PC-9 (cell line): ENCODE measurements at regions of chr12 and their contacts with region 1.

Region 1: GRCh38 chr12:12376646-12377448 is 20.0 kb downstream of the BORCS5 start:
- DNase-seq: peak in 1 of 2 experiments; percentile 80
- H3K4me3 ChIP-seq: no peak overlapping the region
- H3K27ac ChIP-seq: no peak overlapping the region
- H3K4me1 ChIP-seq: no peaks in the 10 kb centered on the region
- H3K27me3 ChIP-seq: no peaks in the 10 kb centered on the region
- CTCF ChIP-seq: peak; percentile 87

Region 2: GRCh38 chr12:12081836-12082497 is 294.9 kb before region 1 on chr12:
- CTCF ChIA-PET with region 1: no interaction called
- POLR2A ChIA-PET with region 1: no interaction called
- intact Hi-C with region 1: loop called (anchors 5 kb)
- DNase-seq: peak; percentile 24 to 40
- H3K4me3 ChIP-seq: no peak overlapping the region
- H3K27ac ChIP-seq: no peak overlapping the region
- H3K4me1 ChIP-seq: no peaks in the 10 kb centered on the region
- H3K27me3 ChIP-seq: no peaks in the 10 kb centered on the region
- CTCF ChIP-seq: no peak; the same call in 1 of the 2 replicates

Region 3: GRCh38 chr12:12115514-12115913 is 261.3 kb before region 1 on chr12:
- CTCF ChIA-PET with region 1: no interaction called
- POLR2A ChIA-PET with region 1: no interaction called
- intact Hi-C with region 1: no loop called
- DNase-seq: no peak
- H3K4me3 ChIP-seq: no peak overlapping the region
- H3K27ac ChIP-seq: no peak overlapping the region
- H3K4me1 ChIP-seq: no peaks in the 10 kb centered on the region
- H3K27me3 ChIP-seq: no peaks in the 10 kb centered on the region
- CTCF ChIP-seq: no peak

Region 4: GRCh38 chr12:12334367-12335040 is 42.3 kb before region 1 on chr12:
- CTCF ChIA-PET with region 1: no interaction called
- POLR2A ChIA-PET with region 1: no interaction called
- intact Hi-C with region 1: no loop called
- DNase-seq: peak in 1 of 2 experiments; percentile 57
- H3K4me3 ChIP-seq: no peak overlapping the region
- H3K27ac ChIP-seq: no peak overlapping the region
- H3K4me1 ChIP-seq: peaks cover 44% of the 10 kb centered on the region
- H3K27me3 ChIP-seq: no peaks in the 10 kb centered on the region
- CTCF ChIP-seq: peak; percentile 89

Region 5: DNA sequence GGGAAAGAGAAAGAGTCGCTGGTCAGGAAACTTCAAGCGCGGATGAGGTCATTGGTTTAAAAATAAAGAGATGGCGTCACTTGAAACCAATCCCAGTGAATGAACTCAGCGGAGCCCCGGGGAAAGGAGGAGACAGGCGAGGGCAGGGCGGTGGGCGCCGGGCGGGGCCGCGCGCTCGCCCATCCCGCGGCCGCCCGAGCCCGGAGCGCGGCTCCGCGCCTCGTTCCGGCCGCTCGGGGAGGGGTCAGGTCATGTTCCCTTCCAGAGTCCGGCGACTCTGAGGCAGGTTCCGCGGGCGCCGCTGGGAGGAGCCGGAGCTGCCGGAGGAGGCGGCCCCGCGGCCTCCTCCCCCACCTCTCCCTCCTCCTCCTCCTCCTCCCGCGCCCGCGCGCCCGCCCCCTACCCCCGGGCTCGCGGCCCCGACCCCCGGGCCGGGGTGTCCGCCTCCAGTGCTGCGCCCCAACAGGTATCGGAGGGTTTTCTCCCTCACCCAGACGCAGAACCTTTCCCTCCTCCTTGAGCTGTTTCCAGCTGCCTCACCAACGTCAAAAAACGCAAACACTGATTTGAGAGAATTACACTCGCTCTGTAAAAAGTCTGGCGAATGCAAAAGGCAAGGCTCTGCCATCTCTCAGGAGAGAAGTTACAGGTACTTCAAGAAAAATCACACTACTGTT is 185.9 kb after region 1 on chr12 and contains the start of gene DUSP16:
- CTCF ChIA-PET with region 1: no interaction called
- POLR2A ChIA-PET with region 1: no interaction called
- intact Hi-C with region 1: loop called (anchors 2 kb)
- DNase-seq: peak; percentile 90 to 99
- H3K4me3 ChIP-seq: peak within 1 kb of the TSS; percentile 73
- H3K27ac ChIP-seq: peak within 1 kb of the TSS; percentile 92
- H3K4me1 ChIP-seq: peaks cover 25% of the 10 kb centered on the region
- H3K27me3 ChIP-seq: no peaks in the 10 kb centered on the region
- CTCF ChIP-seq: peak; percentile 36; the same call in 1 of the 2 replicates
- total RNA-seq, gene DUSP16: 23.6 and 24.8 TPM in 2 replicates

Region 6: DNA sequence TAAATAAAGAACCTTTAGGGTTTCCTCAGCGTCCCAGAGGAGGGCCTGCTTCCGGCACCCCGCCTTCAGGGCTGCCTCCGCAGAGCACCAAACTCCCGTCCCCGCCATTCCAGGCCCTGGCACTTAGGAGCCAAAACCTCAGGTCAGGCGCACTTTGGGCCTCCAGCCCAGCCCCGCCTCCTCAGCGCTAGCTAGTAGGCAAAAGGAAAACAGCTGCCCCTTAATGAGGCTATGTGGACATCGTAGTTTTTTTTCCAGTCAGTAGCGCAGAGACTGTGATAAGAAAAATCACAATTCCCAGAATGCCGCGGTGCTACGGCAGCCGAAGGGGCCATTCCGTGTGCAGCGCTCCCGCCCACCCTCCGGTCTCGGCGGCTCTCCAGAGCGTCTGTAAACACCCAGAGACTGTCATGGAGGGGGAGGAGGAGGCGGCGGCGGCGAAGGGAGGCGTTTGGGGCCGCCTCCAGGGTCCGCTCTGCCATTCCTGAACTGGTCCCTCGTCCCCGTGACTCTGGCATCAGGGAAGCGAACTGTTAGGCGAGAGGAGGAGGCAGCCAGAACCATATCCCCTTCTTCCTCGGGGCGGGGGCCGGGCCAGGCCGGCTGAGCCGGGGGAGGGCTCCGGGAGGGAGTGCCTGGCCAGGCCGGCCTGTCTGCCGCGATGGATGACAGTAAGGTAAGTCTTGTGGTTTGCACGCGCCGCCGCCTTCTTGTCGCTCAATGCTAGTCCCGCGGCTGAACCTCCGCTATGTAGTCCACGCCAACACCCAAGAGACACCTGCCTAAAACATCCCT is 234.9 kb after region 1 on chr12 and contains the start of gene CREBL2:
- CTCF ChIA-PET with region 1: no interaction called
- POLR2A ChIA-PET with region 1: interaction called, 5 read pairs
- intact Hi-C with region 1: loop called (anchors 1 kb)
- DNase-seq: peak; percentile 91 to 93
- H3K4me3 ChIP-seq: peak within 1 kb of the TSS; percentile 89
- H3K27ac ChIP-seq: peak within 1 kb of the TSS; percentile 83
- H3K4me1 ChIP-seq: peaks cover 30% of the 10 kb centered on the region
- H3K27me3 ChIP-seq: no peaks in the 10 kb centered on the region
- CTCF ChIP-seq: no peak
- total RNA-seq, gene CREBL2: 26.6 and 30.3 TPM in 2 replicates

Region 7: DNA sequence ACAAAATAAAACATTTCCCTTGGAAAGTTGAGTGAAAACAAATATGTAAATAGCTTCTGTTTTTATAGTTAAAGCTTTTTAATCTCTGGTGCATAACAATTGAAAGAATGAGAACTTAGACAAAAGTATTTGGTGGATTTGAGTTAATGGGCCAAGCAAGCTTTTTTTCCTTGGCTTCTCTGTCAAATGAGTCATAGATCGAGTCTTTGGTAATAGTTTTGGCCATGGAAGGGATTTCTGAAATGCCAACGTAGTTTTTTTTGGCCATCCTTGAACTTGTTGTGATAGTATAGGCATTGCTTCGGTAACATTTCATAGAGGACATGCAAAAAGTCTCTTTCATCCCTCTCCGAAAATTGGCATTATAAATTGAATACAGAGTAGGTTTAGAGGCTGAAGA is 284.2 kb after region 1 on chr12:
- CTCF ChIA-PET with region 1: interaction called, 8 read pairs
- POLR2A ChIA-PET with region 1: no interaction called
- intact Hi-C with region 1: loop called (anchors 1 kb)
- DNase-seq: no peak
- H3K4me3 ChIP-seq: no peak overlapping the region
- H3K27ac ChIP-seq: no peak overlapping the region
- H3K4me1 ChIP-seq: no peaks in the 10 kb centered on the region
- H3K27me3 ChIP-seq: no peaks in the 10 kb centered on the region
- CTCF ChIP-seq: no peak

Region 8: DNA sequence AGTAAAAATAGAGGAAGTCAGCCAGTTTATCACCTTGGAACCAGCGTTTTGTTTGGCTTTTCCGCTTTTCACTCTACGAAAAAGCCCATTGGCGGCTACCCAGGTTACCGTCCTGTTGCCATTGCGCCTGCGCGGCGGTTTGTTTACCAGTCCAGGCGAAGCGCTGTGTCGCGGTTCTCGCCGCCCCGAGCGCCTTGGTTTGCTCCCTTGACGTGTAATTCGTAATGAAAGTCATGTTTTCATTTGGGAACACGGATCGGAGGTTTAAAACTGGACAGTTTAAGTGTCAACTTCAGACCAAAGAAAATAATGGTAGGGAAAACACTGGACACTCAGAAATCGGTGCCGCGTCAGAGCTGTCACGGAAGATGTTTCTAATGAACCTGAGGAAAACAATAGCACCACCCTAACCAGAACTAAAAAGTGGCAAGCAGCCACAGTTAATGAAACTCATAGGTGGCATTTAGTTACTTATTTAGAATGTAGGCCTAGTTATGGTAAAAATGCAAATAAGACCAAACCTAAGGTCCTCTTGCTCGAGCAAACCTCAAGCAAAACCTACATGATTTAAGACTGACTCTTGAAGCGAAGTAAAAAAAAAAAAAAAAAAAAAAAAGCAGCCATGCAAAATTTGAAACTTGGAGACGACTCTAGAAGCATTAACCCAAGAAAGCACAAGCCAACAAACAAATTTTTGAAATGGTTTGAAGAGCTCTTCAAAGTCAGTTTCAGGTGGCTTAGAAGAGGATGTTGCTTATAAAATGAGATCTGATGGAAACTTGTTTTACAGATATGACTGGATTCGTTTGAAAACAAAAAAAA is 319.9 kb after region 1 on chr12:
- CTCF ChIA-PET with region 1: interaction called, 5 read pairs
- POLR2A ChIA-PET with region 1: interaction called, 4 read pairs
- intact Hi-C with region 1: loop called (anchors 2 kb)
- DNase-seq: peak; percentile 64 to 89
- H3K4me3 ChIP-seq: peak overlapping the region; percentile 70
- H3K27ac ChIP-seq: peak overlapping the region; percentile 84
- H3K4me1 ChIP-seq: peaks cover 13% of the 10 kb centered on the region
- H3K27me3 ChIP-seq: no peaks in the 10 kb centered on the region
- CTCF ChIP-seq: no peak

Region 9: GRCh38 chr12:12736759-12737676 is 360.2 kb after region 1 on chr12:
- CTCF ChIA-PET with region 1: interaction called, 10 read pairs
- POLR2A ChIA-PET with region 1: no interaction called
- intact Hi-C with region 1: loop called (anchors 1 kb)
- DNase-seq: no peak
- H3K4me3 ChIP-seq: no peak overlapping the region
- H3K27ac ChIP-seq: no peak overlapping the region
- H3K4me1 ChIP-seq: peaks cover 16% of the 10 kb centered on the region; the same call in 1 of the 2 replicates
- H3K27me3 ChIP-seq: no peaks in the 10 kb centered on the region
- CTCF ChIP-seq: peak; percentile 70